ENCODE measurements at regions of chr17 and their contacts with region 1.

Region 1: GRCh38 chr17:12282056-12282455 is 261.4 kb downstream of the MAP2K4 start:
- DNase-seq: no peak
- ATAC-seq: no peak
- H3K4me3 ChIP-seq: no peak overlapping the region
- H3K27ac ChIP-seq: no peak overlapping the region
- H3K4me1 ChIP-seq: no peaks in the 10 kb centered on the region
- H3K27me3 ChIP-seq: no peaks in the 10 kb centered on the region
- CTCF ChIP-seq: no peak

Region 2: DNA sequence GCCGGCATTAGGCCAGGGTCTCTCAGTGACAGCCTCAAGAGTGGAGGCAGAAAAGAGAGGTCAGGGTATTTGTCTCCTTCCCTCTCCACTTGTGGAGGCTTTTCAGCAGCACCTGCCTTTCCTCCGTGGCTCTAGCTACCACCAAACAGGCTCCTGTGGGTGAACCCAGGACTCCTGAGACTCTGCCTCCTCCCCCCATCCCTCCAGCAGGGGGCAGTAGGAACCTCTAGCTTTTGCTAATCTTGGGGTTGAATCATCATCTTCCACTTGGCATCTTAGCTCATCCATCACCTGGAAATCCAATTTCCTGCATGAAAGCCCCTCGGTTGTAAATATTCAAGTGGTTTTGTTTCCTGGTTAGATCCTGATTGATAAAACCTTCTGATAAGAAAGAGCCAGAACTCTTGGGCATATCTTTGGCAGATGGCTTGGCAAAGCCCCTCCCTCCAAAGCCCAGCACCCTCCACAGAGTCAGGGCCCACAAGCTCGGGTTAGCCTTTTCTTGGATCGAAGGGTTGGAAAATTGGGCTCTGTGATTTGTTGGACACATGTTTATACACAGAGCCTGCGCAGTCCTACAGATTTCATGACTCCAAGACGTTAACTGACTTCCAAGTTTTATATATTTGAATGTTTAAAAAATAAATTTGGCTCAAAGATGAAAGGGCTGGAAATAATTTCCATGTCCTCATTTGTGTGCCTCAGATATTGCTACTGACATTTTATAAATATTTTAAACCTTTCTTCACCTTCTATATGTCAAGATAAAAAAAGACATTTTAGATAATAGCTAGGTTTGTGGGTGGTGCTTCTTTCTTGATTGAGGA is 60.8 kb after region 1 on chr17:
- intact Hi-C with region 1: loop called in 1 of 2 experiments (anchors 10 kb)
- DNase-seq: peak in 2 of 4 donors; percentile 28 to 43
- ATAC-seq: peak; percentile 57
- H3K4me3 ChIP-seq: no peak overlapping the region
- H3K27ac ChIP-seq: no peak overlapping the region
- H3K4me1 ChIP-seq: no peaks in the 10 kb centered on the region
- H3K27me3 ChIP-seq: peaks cover 0 to 6% of the 10 kb centered on the region in 2 donors
- CTCF ChIP-seq: peak in 1 of 2 donors; percentile 31

Region 3: DNA sequence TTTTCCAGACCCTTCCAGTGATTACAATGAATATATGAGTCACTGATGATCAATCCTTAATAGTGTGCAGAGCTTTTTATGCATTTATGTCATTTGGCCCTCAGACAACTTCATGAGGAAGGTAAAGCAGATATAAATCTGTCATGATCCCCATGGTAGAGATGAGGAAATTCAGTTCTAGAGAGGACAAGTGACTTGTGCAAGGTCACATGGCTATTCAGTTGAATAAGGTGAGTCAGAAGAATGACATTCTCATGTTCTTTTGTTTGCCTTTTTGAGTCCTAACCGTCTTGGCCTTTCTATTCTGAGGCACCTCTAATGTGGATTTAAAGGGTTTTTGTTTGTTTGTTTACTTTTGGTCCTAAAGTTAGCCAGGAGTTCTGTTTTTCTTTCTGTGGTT is 852.0 kb after region 1 on chr17:
- intact Hi-C with region 1: no loop called
- DNase-seq: no peak
- ATAC-seq: no peak
- H3K4me3 ChIP-seq: no peak overlapping the region
- H3K27ac ChIP-seq: no peak overlapping the region
- H3K4me1 ChIP-seq: no peaks in the 10 kb centered on the region
- H3K27me3 ChIP-seq: no peaks in the 10 kb centered on the region
- CTCF ChIP-seq: no peak

Measured in left lung (tissue), 14 donors.